Dorsolateral prefrontal cortex (tissue), 120 donors: ENCODE measurements at regions of chr7 and their contacts with region 1.

Region 1: GRCh38 chr7:143305423-143306070 is 10.4 kb upstream of the CLCN1 start:
- DNase-seq: peak; percentile 45 to 83 (median 80)
- H3K4me3 ChIP-seq: no peak overlapping the region
- H3K27ac ChIP-seq: peak overlapping the region in 8 of 59 donors; percentile 10 to 53 (median 24)
- H3K27me3 ChIP-seq: no peaks in the 10 kb centered on the region
- CTCF ChIP-seq: peak; percentile 42 to 93 (median 83)

Region 2: GRCh38 chr7:142983825-142984224 is 321.7 kb before region 1 on chr7:
- intact Hi-C with region 1: no loop called
- DNase-seq: no peak
- H3K4me3 ChIP-seq: no peak overlapping the region
- H3K27ac ChIP-seq: peak overlapping the region in 4 of 59 donors; percentile 13 to 48 (median 27)
- H3K27me3 ChIP-seq: no peaks in the 10 kb centered on the region
- CTCF ChIP-seq: no peak

Region 3: DNA sequence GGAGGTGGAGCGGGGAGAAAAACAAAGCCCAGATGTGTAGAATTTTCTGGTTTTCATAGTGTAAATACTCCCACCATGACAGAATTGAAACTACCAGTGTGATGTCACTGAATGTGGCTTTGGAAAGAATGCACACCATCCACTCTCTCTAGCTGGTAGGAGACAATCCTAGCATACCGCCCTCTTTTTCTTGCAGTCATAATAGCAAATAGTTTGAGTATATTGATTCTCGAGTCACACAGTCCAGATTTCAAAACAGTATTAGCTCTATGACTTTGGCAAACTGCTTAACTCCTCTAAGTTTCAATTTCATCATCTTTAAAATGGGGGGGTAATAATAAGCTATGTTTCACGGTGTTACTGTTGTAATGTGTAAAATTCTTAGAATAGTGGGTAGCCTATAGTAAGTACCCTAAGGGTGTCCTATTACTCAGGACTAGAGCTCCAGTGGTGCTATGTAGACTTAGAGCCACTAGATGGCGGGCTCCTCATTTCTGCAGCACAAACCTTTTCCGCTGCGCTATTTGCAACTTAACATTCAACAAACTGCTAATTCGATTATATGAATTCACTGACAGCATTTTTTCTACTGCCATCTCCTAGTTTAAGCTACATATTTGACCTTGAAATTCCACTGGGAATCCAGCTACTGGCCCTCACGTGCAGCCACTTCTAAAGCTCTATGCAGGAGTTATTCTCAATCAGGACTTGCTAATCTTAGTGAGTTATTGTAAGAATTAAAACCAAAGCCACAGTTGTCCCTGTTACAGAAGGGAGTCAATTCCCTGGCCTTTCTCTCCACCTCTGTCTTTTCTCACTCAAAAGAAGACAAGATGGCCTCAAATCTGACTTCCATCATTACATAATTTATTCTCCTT is 65.0 kb before region 1 on chr7:
- intact Hi-C with region 1: loop called (anchors 2 to 5 kb)
- DNase-seq: peak; percentile 48 to 83 (median 68)
- H3K4me3 ChIP-seq: peak overlapping the region in 19 of 59 donors; percentile 5 to 47 (median 17)
- H3K27ac ChIP-seq: peak overlapping the region in 13 of 59 donors; percentile 1 to 80 (median 41)
- H3K27me3 ChIP-seq: no peaks in the 10 kb centered on the region
- CTCF ChIP-seq: peak; percentile 81 to 99 (median 95)

Region 4: GRCh38 chr7:143355450-143356385 is 50.2 kb after region 1 on chr7:
- intact Hi-C with region 1: loop called in 1 of 2 experiments (anchors 5 kb)
- DNase-seq: no peak
- H3K4me3 ChIP-seq: peak overlapping the region in 2 of 59 donors; percentile 19 to 20
- H3K27ac ChIP-seq: peak overlapping the region in 52 of 59 donors; percentile 4 to 79 (median 58)
- H3K27me3 ChIP-seq: no peaks in the 10 kb centered on the region
- CTCF ChIP-seq: peak in 5 of 56 donors; percentile 14 to 29 (median 16)